Activated naive CD4-positive, alpha-beta T cell treated with anti-CD3 and anti-CD28 coated beads, Interleukin-2, amount 10 ng/mL, durations not matched to agents 7 days and 5 days (primary cell): ENCODE measurements at regions of chr19 and their contacts with region 1.

Region 1: GRCh38 chr19:17470068-17470841 is at the start of gene SLC27A1:
- DNase-seq: peak; percentile 94
- H3K4me3 Mint-ChIP-seq: peak within 1 kb of the TSS; percentile 82
- H3K27ac Mint-ChIP-seq: peak within 1 kb of the TSS; percentile 72
- H3K4me1 Mint-ChIP-seq: peaks cover 46% of the 10 kb centered on the region
- H3K27me3 Mint-ChIP-seq: peaks cover 58% of the 10 kb centered on the region

Region 2: GRCh38 chr19:17441241-17442021 is 28.8 kb before region 1 on chr19:
- CTCF ChIA-PET with region 1: interaction called, 10 read pairs
- DNase-seq: peak; percentile 35
- H3K4me3 Mint-ChIP-seq: no peak overlapping the region
- H3K27ac Mint-ChIP-seq: no peak overlapping the region
- H3K4me1 Mint-ChIP-seq: no peaks in the 10 kb centered on the region
- H3K27me3 Mint-ChIP-seq: peaks cover 17% of the 10 kb centered on the region

Region 3: DNA sequence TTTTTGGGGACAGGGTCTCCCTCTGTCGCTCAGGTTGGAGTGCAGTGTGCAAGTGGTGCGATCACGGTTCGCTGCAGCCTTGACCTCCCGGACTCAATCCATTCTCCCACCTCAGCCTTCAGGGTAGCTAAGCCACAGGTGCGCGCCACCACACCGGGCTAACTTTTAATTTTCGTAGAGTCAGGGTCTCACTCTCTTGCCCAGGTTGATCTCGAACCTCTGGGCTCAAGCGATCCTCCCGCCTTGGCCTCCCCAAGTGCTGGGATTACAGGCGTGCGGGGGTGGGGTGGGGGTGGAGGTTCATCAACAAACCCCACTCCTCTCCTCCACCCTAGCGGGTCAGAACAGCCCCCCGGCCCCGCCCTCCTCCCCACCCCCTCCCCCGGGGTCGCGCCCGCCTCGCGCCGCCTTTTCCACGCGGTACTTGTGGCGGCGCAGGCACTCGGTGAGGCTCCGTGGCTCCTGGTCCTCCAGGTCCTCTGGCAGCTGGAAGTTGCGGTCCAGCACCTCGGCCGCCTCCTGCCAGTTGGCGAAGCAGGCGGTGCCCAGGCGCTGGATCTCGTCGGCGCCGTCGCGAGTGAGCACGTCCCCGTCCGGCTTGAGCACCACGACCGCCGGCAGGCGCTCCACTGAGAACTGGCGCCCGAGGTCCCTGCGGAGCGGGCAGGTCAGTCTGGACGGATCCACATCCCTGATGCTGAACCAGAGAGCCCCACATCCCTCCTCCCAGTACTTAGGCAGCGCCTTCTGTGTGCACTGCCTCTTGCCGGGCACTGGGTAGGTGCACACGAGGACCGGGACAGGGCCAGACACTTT is 14.7 kb before region 1 on chr19:
- CTCF ChIA-PET with region 1: interaction called, 10 read pairs
- DNase-seq: no peak
- H3K4me3 Mint-ChIP-seq: no peak overlapping the region
- H3K27ac Mint-ChIP-seq: no peak overlapping the region
- H3K4me1 Mint-ChIP-seq: peaks cover 16% of the 10 kb centered on the region
- H3K27me3 Mint-ChIP-seq: peaks cover 80% of the 10 kb centered on the region

Region 4: GRCh38 chr19:17484520-17485180 is 14.4 kb after region 1 on chr19:
- CTCF ChIA-PET with region 1: no interaction called
- DNase-seq: no peak
- H3K4me3 Mint-ChIP-seq: no peak overlapping the region
- H3K27ac Mint-ChIP-seq: no peak overlapping the region
- H3K4me1 Mint-ChIP-seq: peaks cover 23% of the 10 kb centered on the region
- H3K27me3 Mint-ChIP-seq: peaks cover 10% of the 10 kb centered on the region

Region 5: GRCh38 chr19:17576759-17577473 is 106.7 kb after region 1 on chr19:
- CTCF ChIA-PET with region 1: interaction called, 10 read pairs
- DNase-seq: peak; percentile 30
- H3K4me3 Mint-ChIP-seq: no peak overlapping the region
- H3K27ac Mint-ChIP-seq: no peak overlapping the region
- H3K4me1 Mint-ChIP-seq: peaks cover 7% of the 10 kb centered on the region
- H3K27me3 Mint-ChIP-seq: no peaks in the 10 kb centered on the region